ENCODE measurements at regions of chr15 and their contacts with region 1.

Region 1: GRCh38 chr15:87317900-87318299 is 938.6 kb downstream of the NTRK3 start:
- DNase-seq: no peak

Region 2: DNA sequence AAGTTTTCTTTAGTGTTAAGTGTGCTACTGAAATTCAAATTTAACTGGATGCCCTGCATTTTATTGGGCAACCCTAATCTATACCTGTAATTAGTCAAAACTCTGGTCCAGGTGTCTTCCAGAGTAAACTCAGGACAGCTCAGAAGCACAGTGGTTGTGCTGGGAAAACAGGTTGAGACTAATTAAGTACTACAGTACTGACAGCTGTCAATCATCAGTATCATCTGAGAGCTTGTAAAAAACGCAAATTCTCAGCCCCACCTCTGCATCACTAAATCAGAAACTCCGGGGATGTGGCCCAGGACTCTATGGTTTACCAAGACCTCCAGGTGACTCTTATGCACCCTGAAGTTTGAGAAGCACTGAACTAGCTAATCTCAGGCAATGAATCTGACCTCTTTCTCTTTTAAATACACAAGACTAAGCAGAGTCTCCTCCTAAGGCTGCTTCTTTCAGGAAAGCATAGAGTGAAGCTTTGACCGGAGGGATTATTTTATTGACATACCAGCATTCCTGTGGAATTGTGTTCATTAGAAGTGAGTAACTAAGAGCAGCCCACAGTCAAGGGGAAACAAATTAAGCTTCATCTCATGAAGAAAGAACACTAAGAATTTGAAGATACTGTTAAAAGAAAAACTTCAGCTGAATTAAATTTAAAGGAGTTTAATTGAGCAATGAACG is 25.0 kb before region 1 on chr15:
- intact Hi-C with region 1: loop called in 1 of 2 experiments (anchors 1 kb)
- DNase-seq: no peak

Measured in posterior vena cava (tissue), 2 donors.